ENCODE measurements at regions of chr6 and their contacts with region 1.

Region 1: DNA sequence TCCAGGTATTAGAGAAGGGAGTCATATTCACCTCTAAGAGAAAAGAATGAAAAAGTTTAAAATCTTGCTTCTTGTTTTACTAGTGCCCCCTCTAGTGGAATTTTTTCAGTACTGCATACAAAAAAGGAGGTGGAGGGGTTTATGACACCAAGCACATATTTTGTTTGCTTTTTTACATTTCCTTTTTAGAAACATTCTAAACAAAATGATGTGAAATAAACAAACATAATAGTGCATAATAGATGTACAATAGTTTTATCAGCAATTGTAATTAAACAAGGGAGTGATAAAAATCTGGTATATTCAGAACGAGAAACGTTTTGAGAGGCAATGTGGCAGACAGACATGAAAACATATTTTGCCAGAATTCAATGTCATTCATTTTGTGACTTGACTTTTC is 111.0 kb upstream of the TFAP2D start:
- DNase-seq: no peak
- ATAC-seq: no peak
- H3K4me3 ChIP-seq: no peak overlapping the region
- H3K27ac ChIP-seq: no peak overlapping the region
- H3K4me1 ChIP-seq: no peaks in the 10 kb centered on the region
- H3K27me3 ChIP-seq: no peaks in the 10 kb centered on the region
- CTCF ChIP-seq: peak; percentile 76

Region 2: DNA sequence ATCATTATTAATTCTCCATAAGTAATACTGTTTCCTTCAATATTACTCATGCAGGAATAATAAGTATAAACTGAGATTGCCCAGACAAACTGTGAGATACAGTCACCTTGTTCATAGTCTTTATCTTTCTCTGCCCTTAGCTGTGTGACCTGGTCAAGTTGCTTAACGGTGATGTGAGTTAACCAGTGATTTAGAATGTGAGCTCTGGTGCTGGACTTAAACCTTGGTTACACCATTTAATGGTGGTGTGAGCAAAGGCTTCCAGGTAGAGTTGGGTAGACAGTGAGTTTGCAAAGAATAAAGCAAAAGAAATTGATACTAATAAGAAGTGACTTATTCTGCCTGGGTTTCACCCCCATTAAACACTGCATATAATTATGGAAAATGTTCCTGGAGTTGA is 466.3 kb before region 1 on chr6:
- intact Hi-C with region 1: loop called (anchors 10 kb)
- DNase-seq: no peak
- ATAC-seq: no peak
- H3K4me3 ChIP-seq: no peak overlapping the region
- H3K27ac ChIP-seq: no peak overlapping the region
- H3K4me1 ChIP-seq: no peaks in the 10 kb centered on the region
- H3K27me3 ChIP-seq: no peaks in the 10 kb centered on the region
- CTCF ChIP-seq: no peak